PC-9 (cell line): ENCODE measurements at regions of chr10 and their contacts with region 1.

Region 1: DNA sequence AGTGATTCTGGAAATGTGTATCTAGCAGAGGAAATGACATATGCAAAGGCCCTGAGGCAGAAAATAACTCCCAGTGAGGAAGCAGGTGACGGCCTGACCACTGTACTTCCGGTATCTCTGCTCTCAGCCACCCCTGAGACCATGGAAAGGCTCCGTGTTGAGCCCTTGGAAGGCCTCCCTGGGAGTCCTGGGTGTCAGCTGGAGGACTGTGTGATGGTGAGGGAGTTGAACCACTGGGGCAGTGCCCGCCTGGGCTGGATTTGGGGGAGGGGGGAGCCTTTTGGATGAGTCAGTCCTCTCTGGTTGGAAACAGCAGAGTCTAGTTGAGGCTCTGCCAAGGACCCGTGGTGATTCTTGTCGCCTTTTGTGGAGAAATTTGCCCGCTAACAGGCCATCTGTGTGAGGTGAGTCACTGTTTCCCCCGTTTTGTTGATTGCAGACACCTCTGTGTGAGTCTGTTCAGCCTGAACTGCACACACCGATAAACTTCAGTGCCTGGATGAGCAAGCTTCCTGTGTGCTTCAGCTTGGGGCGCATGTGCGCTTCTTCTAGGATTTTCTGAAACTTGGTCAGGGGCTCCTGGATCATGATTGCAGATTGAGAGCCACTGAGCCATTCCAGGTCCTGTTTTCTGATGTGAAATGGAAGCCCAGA is 98.6 kb downstream of the GRK5 start:
- DNase-seq: peak; percentile 79 to 93
- H3K4me3 ChIP-seq: peak overlapping the region; percentile 47; the same call in 1 of the 2 replicates
- H3K27ac ChIP-seq: peak overlapping the region; percentile 86
- H3K4me1 ChIP-seq: peaks cover 62% of the 10 kb centered on the region
- H3K27me3 ChIP-seq: no peaks in the 10 kb centered on the region
- CTCF ChIP-seq: no peak

Region 2: GRCh38 chr10:118911361-118911760 is 394.6 kb before region 1 on chr10:
- CTCF ChIA-PET with region 1: no interaction called
- POLR2A ChIA-PET with region 1: no interaction called
- intact Hi-C with region 1: no loop called
- DNase-seq: peak; percentile 59 to 94
- H3K4me3 ChIP-seq: no peak overlapping the region
- H3K27ac ChIP-seq: peak overlapping the region; percentile 87
- H3K4me1 ChIP-seq: peaks cover 41% of the 10 kb centered on the region
- H3K27me3 ChIP-seq: no peaks in the 10 kb centered on the region
- CTCF ChIP-seq: no peak

Region 3: GRCh38 chr10:119667562-119668328 is 361.8 kb after region 1 on chr10:
- CTCF ChIA-PET with region 1: no interaction called
- POLR2A ChIA-PET with region 1: no interaction called
- intact Hi-C with region 1: loop called (anchors 10 kb)
- DNase-seq: peak; percentile 88 to 93
- H3K4me3 ChIP-seq: peak overlapping the region; percentile 31; the same call in 1 of the 2 replicates
- H3K27ac ChIP-seq: peak overlapping the region; percentile 90
- H3K4me1 ChIP-seq: peaks cover 90% of the 10 kb centered on the region
- H3K27me3 ChIP-seq: no peaks in the 10 kb centered on the region
- CTCF ChIP-seq: no peak